Caco-2 (cell line): ENCODE measurements at regions of chrX and their contacts with region 1.

Region 1: DNA sequence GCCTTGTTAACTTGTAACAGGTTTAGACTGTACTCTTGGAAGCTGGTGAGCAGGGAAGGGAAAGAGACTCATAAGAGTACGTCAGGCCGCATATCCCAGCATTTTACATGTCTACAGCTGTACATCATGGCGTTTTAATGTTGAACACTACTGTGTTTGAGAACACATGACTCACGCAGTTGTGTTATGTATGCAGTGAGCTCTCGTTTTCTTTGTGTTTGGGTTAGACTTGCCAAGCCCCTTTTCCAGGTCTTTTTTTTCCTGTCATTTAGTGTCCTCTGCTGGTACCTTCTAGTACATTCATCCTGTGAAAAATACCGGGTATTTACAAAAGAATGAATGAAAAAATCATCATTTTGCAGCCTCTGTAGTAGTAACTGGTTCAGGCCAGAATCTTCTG is 35.3 kb downstream of the SMS start:
- DNase-seq: no peak
- H3K4me3 ChIP-seq: no peak overlapping the region
- H3K4me3 Mint-ChIP-seq: no peak overlapping the region
- H3K27ac Mint-ChIP-seq: no peak overlapping the region
- H3K4me1 ChIP-seq: peaks cover 18% of the 10 kb centered on the region
- H3K4me1 Mint-ChIP-seq: peaks cover 20% of the 10 kb centered on the region
- H3K27me3 ChIP-seq: no peaks in the 10 kb centered on the region
- H3K27me3 Mint-ChIP-seq: no peaks in the 10 kb centered on the region
- CTCF ChIP-seq: peak in 1 of 2 experiments; percentile 28

Region 2: DNA sequence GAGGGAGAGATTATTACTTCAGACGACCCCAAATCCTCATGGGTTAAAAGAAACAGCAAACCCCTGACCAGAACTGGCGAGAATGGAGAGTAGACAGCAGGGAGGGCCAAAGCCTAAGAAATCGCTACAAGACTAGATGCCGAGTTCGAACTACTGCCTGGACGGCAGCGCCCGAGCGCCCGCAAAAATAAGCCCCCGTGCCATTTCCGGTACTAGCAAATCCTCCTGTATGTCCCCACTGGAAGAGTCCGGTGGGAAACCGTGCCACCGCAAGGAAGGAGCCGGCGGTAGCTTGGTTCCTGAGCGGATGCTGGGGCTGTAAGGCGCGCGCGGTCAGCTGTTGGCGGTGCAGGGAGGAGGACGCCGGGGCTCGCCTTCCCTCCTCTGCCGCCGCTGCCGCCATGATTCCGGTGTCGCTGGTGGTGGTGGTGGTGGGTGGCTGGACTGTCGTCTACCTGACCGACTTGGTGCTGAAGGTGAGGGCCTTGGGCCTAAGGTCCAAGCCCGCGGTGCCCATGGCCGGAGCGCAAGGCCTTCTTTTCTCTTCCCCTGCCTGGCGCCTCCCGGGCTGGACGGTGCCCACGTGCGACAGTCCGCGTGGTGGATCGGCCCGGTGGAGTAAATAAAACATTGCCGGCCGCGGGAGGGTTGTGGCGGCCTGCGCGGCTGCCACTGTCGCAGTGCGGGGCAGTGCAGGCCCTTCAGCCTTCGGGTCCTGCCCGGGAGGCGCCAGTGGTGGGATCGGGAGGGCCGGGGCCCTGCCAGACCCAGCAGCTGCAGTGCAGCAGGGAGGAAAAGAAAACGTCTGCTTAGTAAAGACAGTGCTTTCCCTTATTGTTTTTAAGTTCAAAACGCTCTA is 136.2 kb before region 1 on chrX and contains the start of gene MBTPS2:
- CTCF ChIA-PET with region 1: no interaction called
- POLR2A ChIA-PET with region 1: interaction called, 3 read pairs
- intact Hi-C with region 1: loop called (anchors 1 kb)
- DNase-seq: peak; percentile 84
- H3K4me3 ChIP-seq: peak within 1 kb of the TSS; percentile 86
- H3K4me3 Mint-ChIP-seq: peak within 1 kb of the TSS; percentile 79
- H3K27ac Mint-ChIP-seq: peak within 1 kb of the TSS; percentile 87
- H3K4me1 ChIP-seq: peaks cover 10% of the 10 kb centered on the region
- H3K4me1 Mint-ChIP-seq: peaks cover 9% of the 10 kb centered on the region
- H3K27me3 ChIP-seq: no peaks in the 10 kb centered on the region
- H3K27me3 Mint-ChIP-seq: no peaks in the 10 kb centered on the region
- CTCF ChIP-seq: no peak
- total RNA-seq, gene MBTPS2: 21.7 and 22.0 TPM in 2 replicates